Activated T-helper 1 cell treated with anti-CD3 and anti-CD28 coated beads, Interleukin-12 subunit alpha, Interleukin-12 subunit beta, Interleukin-2, Interleukin-4 antibody, amounts not matched to agents 30 ng/mL and 10 ng/mL and 1 ng/mL, durations not matched to agents 14 hours and 24 hours and 36 hours (primary cell): ENCODE measurements at regions of chr16 and their contacts with region 1.

Region 1: GRCh38 chr16:16127469-16128116 is 95.7 kb downstream of the ABCC6 start:
- DNase-seq: peak; percentile 60
- H3K4me3 Mint-ChIP-seq: no peak overlapping the region
- H3K27ac Mint-ChIP-seq: peak overlapping the region; percentile 68
- H3K4me1 Mint-ChIP-seq: peaks cover 8% of the 10 kb centered on the region
- H3K27me3 Mint-ChIP-seq: no peaks in the 10 kb centered on the region

Region 2: DNA sequence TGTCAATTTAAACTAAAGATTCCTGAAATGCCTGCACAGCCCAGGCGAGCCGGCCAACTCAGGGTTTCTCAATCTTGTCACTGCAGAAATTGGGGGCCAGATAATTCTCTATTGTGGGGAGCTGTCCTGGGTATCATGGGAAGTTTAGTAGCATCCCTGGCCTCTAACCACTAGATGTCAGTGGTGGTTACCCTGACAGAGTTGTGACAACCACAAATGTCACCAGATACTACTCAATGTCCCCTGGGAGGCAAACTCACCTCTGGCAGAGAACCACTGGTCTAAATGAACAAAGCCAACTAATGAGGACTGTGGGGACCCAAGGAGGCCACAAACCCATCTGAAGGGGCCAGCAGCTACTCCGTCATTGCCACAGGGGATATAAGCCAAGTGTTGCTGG is 361.7 kb before region 1 on chr16:
- intact Hi-C with region 1: loop called (anchors 1 kb)
- DNase-seq: peak; percentile 33
- H3K4me3 Mint-ChIP-seq: no peak overlapping the region
- H3K27ac Mint-ChIP-seq: no peak overlapping the region
- H3K4me1 Mint-ChIP-seq: peaks cover 4% of the 10 kb centered on the region
- H3K27me3 Mint-ChIP-seq: no peaks in the 10 kb centered on the region

Region 3: DNA sequence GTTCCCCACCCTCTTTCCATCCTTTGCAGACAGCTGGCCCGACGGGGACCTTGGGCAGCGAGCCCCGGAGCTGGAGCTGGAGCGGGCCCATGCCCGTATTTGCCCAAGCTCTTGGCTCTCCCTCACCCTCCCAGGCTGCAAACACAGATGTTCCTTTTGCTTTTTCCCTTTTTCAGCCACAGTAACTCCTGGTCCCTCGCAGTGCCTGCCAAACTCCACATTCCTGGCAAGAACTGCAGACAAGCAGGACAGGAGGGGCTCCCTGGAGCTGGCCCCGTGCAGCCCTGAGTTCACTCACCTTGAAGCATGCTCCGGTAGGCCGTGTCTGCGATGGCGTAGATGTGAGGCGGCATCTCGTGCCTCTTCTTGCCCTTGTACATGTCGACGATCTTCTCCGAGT is 304.6 kb before region 1 on chr16:
- intact Hi-C with region 1: loop called (anchors 2 kb)
- DNase-seq: no peak
- H3K4me3 Mint-ChIP-seq: no peak overlapping the region
- H3K27ac Mint-ChIP-seq: no peak overlapping the region
- H3K4me1 Mint-ChIP-seq: no peaks in the 10 kb centered on the region
- H3K27me3 Mint-ChIP-seq: peaks cover 2% of the 10 kb centered on the region

Region 4: DNA sequence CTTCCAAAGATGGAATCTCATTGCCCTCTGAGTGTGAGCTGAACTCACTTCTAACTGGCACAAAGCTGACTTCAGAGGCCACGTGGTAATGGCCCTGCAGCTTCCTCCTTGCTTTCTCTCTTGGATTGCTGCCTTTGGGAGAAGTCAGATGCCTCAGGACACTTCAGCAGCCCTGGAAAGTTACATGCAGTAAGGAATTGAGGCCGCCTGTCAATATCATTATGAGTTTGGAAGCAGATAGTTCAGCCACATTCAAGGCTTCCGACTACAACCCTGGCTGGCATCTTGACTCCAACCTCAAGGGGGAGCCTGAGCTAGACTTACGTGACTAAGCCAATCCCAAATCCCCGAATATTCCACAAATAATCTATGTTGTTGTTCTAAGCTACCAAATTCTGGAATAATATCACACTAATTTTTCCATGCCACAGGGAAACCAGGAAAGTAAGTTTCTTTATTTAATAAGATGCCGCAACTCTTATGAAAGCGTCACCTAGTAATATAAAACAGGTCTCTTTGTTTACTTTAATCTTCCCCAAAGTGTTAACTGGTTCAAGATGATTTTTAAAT is 252.8 kb before region 1 on chr16:
- intact Hi-C with region 1: loop called (anchors 2 kb)
- DNase-seq: no peak
- H3K4me3 Mint-ChIP-seq: no peak overlapping the region
- H3K27ac Mint-ChIP-seq: no peak overlapping the region
- H3K4me1 Mint-ChIP-seq: peaks cover 15% of the 10 kb centered on the region
- H3K27me3 Mint-ChIP-seq: no peaks in the 10 kb centered on the region

Region 5: DNA sequence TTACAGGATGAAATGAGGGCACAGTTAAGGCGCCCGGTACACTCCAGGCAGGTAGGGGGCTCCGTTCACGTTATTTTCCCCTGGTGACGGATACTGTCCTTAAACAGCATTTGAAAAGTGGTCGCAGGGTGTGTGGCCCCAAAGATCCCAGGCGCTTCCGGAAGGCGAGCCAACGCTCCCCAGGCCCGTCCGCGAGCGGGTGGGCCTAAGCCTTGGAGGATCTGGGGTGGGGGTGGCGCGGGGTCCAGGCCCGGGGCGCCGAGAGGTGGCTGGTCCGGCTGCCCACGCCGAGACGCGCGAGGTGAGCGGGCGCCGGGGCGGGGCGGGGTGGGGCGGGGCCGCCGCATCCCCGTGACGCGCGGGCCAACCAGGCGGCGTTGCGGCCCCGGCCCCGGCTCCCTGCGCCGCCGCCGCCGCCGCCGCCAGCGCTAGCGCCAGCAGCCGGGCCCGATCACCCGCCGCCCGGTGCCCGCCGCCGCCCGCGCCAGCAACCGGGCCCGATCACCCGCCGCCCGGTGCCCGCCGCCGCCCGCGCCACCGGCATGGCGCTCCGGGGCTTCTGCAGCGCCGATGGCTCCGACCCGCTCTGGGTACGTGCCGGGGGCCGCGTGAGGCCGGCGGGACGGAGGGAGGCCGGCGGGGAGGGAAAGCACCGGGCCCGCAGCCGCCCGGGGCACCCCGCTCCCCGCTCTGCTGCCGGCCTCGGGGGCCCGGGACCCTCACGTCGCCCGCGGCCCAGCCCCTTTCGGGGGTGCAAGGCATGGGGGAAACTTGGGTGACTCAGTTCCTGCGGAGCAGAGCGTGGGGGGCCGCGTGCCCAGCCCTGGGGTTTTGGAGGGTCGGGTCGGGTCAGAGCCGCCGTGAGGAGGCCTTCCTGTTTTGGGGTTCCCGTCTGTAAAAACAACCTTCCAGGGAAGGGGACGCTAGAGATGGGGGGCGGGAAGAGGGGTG is 178.1 kb before region 1 on chr16 and contains the start of gene ABCC1:
- intact Hi-C with region 1: loop called (anchors 2 kb)
- DNase-seq: peak; percentile 34
- H3K4me3 Mint-ChIP-seq: peak within 1 kb of the TSS; percentile 99
- H3K27ac Mint-ChIP-seq: peak within 1 kb of the TSS; percentile 100
- H3K4me1 Mint-ChIP-seq: peaks cover 62% of the 10 kb centered on the region
- H3K27me3 Mint-ChIP-seq: peaks cover 2% of the 10 kb centered on the region
- total RNA-seq, gene ABCC1: 102 and 108 TPM in 2 replicates

Region 6: DNA sequence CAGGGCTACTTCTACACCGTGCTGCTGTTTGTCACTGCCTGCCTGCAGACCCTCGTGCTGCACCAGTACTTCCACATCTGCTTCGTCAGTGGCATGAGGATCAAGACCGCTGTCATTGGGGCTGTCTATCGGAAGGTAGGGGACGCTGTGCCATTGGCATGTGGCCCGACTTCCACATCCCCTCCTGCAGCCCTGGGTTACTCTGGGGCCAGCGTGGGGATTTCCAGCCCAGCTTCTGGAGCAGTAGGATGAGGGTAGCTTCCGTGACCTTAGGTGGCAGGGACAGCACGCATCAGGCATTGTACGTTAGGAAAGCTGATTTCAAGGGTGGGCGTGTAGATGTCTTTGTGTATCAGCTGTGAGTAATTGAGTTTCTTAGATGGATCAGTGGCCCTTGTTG is 81.7 kb before region 1 on chr16:
- intact Hi-C with region 1: loop called (anchors 5 kb)
- DNase-seq: no peak
- H3K4me3 Mint-ChIP-seq: no peak overlapping the region
- H3K27ac Mint-ChIP-seq: peak overlapping the region; percentile 48
- H3K4me1 Mint-ChIP-seq: peaks cover 13% of the 10 kb centered on the region
- H3K27me3 Mint-ChIP-seq: no peaks in the 10 kb centered on the region

Region 7: GRCh38 chr16:16062023-16062932 is 65.3 kb before region 1 on chr16:
- intact Hi-C with region 1: loop called (anchors 5 kb)
- DNase-seq: peak; percentile 36
- H3K4me3 Mint-ChIP-seq: peak overlapping the region; percentile 16
- H3K27ac Mint-ChIP-seq: peak overlapping the region; percentile 31
- H3K4me1 Mint-ChIP-seq: peaks cover 27% of the 10 kb centered on the region
- H3K27me3 Mint-ChIP-seq: no peaks in the 10 kb centered on the region